MCF 10A (cell line): ENCODE measurements at regions of chr2 and their contacts with region 1.

Region 1: DNA sequence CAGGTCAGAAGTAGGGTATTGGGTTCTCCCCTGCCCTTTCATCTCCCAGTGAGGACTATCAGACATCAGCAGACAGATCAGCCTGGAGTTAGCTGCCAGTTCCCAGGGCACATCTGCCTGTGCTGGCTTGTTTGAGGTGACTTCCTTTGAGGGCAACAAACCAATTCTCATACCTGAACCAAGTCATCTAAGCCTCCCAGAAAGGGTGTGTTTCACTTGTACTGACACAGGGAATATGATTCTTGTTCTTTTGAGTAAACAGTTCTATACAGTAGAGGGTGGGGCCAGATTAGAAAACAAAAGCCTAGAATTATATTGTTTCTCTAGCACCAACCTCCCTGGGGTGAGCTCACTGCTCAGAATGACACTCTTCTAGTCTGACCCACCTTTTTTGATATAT is 591.9 kb downstream of the SLC4A3 start:
- DNase-seq: peak; percentile 80
- H3K4me3 Mint-ChIP-seq: no peak overlapping the region
- H3K27ac Mint-ChIP-seq: peak overlapping the region; percentile 84
- H3K4me1 Mint-ChIP-seq: peaks cover 24% of the 10 kb centered on the region
- H3K27me3 Mint-ChIP-seq: no peaks in the 10 kb centered on the region
- CTCF ChIP-seq: no peak

Region 2: GRCh38 chr2:220198920-220199319 is 20.5 kb before region 1 on chr2:
- CTCF ChIA-PET with region 1: interaction called, 5 read pairs
- POLR2A ChIA-PET with region 1: interaction called, 31 read pairs
- intact Hi-C with region 1: no loop called
- DNase-seq: peak; percentile 97
- H3K4me3 Mint-ChIP-seq: no peak overlapping the region
- H3K27ac Mint-ChIP-seq: peak overlapping the region; percentile 69
- H3K4me1 Mint-ChIP-seq: peaks cover 35% of the 10 kb centered on the region
- H3K27me3 Mint-ChIP-seq: no peaks in the 10 kb centered on the region
- CTCF ChIP-seq: no peak